ENCODE measurements at regions of chr2 and their contacts with region 1.

Region 1: DNA sequence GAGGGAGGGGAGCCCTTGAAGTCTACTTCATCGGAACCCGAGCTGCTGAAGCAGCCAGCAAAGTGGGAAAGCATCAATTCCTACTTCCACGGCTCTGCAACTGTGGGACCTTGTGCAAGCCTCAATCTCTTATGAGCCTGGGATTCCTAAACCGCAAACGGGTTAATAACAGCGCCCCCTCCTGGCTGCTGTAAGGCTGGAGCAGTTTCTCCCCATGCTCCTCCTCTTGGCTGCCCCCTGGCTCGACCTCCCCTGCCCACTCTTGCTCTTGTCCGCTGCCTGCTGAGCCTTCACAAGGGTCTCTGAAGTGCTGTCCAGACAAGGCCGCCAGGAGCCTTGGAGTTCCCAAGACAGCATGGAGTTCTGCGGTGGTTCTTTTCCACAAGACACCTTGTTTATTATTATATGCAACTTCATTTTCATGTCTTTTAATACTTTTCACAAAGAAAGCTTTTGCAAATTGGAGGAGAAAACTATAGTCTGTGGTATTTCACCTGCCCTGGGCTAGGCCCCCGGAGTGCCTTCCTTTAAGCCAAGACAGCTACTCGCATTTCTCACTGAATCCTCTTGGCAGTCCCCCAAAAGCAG is 157.2 kb downstream of the DDX1 start:
- DNase-seq: peak; percentile 74 to 75
- ATAC-seq: peak; percentile 70 to 94
- H3K4me3 ChIP-seq: no peak overlapping the region
- H3K27ac ChIP-seq: no peak overlapping the region
- H3K4me1 ChIP-seq: no peaks in the 10 kb centered on the region
- CTCF ChIP-seq: peak; percentile 65
- EP300 ChIP-seq: no peak
- POLR2A ChIP-seq: no peak
- RAD21 ChIP-seq: peak; percentile 57 to 61

Region 2: DNA sequence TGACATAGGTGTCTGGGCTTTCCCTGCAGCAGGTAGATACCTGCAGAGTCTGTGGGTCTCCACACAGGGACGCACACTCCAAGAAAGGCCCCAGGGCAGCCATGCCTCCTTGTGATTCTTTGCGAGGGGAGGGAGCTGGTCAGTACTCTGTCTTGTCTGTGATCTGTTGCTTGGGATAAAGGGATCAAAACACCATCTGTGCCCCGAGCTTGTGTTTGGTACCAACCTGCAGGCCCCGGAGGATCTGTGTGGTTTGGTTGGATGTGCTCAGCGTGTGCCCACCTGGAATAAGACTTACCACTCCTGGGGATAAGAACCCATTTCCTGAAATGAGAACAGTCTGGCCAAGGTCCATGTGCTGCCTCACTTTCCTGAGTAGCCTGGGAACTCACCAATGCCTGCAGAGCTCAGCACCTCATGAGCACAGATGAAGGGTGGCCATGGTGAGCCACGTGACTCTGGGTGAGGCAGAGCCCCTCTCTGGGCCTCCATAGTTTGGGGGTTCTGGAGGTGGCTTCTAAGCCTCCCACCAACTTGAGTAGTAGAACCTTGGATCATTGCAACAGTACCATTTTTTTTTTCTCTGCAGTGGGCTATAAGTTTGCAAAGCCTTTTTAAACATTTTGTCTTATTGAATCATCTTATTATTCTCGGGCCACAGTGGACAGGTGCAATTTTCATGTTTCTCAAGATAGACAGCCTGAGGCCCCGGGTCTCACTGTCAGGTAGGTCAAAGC is 22.3 kb before region 1 on chr2:
- CTCF ChIA-PET with region 1: interaction called, 11 read pairs
- POLR2A ChIA-PET with region 1: no interaction called
- DNase-seq: no peak
- ATAC-seq: no peak
- H3K4me3 ChIP-seq: no peak overlapping the region
- H3K27ac ChIP-seq: no peak overlapping the region
- H3K4me1 ChIP-seq: peaks cover 18% of the 10 kb centered on the region
- CTCF ChIP-seq: no peak
- EP300 ChIP-seq: no peak
- POLR2A ChIP-seq: no peak
- RAD21 ChIP-seq: no peak

Region 3: GRCh38 chr2:15734674-15735483 is 14.0 kb before region 1 on chr2:
- CTCF ChIA-PET with region 1: interaction called, 21 read pairs
- POLR2A ChIA-PET with region 1: no interaction called
- DNase-seq: no peak
- ATAC-seq: no peak
- H3K4me3 ChIP-seq: no peak overlapping the region
- H3K27ac ChIP-seq: no peak overlapping the region
- H3K4me1 ChIP-seq: peaks cover 42% of the 10 kb centered on the region
- CTCF ChIP-seq: no peak
- EP300 ChIP-seq: no peak
- POLR2A ChIP-seq: no peak
- RAD21 ChIP-seq: no peak

Measured in A549 (cell line).